CD8-positive, alpha-beta T cell (primary cell): ENCODE measurements at regions of chr6 and their contacts with region 1.

Region 1: DNA sequence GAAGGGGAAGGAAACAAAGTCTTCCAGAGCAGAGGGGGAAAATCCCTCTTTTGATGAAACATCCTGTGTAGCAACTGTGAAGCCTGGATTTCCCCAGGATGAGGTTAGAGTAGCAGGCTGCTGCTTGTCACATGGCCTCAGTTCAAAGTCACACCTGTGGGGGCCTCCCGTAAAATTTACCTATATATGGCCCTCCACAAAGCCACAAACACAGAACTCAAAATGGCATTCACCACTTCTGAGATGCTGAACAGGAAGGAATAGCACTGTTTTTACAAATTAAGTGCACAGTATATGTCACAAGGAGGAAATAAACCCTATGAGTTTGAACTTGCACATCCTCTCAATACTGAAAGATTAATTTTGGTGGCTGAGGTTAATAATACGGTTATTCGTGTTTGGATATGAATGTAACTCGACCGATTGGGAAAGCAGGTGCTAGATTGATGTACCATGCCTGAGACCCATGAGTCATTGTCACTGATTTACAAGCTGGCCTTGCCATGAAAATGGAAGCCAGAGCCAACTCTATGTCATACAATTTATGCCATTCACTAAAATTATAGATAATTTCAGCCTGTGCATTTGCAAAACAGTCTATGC is 70.6 kb downstream of the SGK1 start:
- DNase-seq: peak; percentile 47 to 96 (median 68)
- ATAC-seq: peak; percentile 87
- H3K4me3 ChIP-seq: no peak overlapping the region
- H3K4me3 Mint-ChIP-seq: peak overlapping the region; percentile 54
- H3K27ac ChIP-seq: peak overlapping the region; percentile 20 to 76
- H3K27ac Mint-ChIP-seq: peak overlapping the region; percentile 92
- H3K4me1 ChIP-seq: peaks cover 63% of the 10 kb centered on the region
- H3K4me1 Mint-ChIP-seq: peaks cover 61% of the 10 kb centered on the region
- H3K27me3 ChIP-seq: no peaks in the 10 kb centered on the region
- H3K27me3 Mint-ChIP-seq: no peaks in the 10 kb centered on the region
- CTCF ChIP-seq: no peak

Region 2: GRCh38 chr6:134235937-134236751 is 11.2 kb before region 1 on chr6:
- CTCF ChIA-PET with region 1: no interaction called
- POLR2A ChIA-PET with region 1: no interaction called
- intact Hi-C with region 1: loop called in 1 of 2 experiments (anchors 2 kb)
- DNase-seq: peak in 2 of 9 experiments; percentile 50 to 69
- ATAC-seq: peak; percentile 38
- H3K4me3 ChIP-seq: no peak overlapping the region
- H3K4me3 Mint-ChIP-seq: no peak overlapping the region
- H3K27ac ChIP-seq: no peak overlapping the region
- H3K27ac Mint-ChIP-seq: no peak overlapping the region
- H3K4me1 ChIP-seq: peaks cover 24% of the 10 kb centered on the region
- H3K4me1 Mint-ChIP-seq: peaks cover 33% of the 10 kb centered on the region
- H3K27me3 ChIP-seq: no peaks in the 10 kb centered on the region
- H3K27me3 Mint-ChIP-seq: no peaks in the 10 kb centered on the region
- CTCF ChIP-seq: no peak

Region 3: DNA sequence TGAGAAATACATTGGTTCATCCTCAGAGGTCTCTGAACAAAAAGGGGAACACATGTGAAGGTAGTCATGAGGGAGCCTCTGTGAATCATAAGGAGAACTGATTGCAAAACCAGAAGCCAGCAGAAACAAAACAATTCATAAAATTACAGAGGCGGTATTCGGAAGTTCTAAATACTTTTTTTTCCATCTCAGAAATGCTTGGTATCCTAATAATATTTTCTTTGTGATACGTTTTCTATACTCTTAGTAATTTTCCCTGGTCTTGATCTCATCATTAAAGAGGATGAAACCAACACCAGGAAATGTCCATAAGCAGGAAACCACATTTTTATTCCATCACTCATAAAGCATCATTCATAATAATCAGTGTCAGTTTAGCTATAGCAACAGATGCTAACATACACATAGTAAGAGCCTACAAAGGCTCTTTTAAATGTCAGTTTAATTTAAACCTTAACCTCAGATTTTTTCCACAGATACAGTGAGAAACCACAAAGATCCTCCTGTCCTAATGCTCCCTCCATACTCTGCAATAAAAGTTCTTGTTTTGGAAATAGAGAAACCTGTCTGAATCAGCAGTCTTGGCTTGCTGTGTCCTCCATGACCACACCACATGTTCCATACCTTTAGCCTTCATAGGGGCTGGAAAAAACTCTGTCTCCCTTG is 41.3 kb after region 1 on chr6:
- CTCF ChIA-PET with region 1: no interaction called
- POLR2A ChIA-PET with region 1: no interaction called
- intact Hi-C with region 1: loop called in 1 of 2 experiments (anchors 5 kb)
- DNase-seq: peak in 1 of 9 experiments; percentile 32
- ATAC-seq: peak; percentile 31
- H3K4me3 ChIP-seq: no peak overlapping the region
- H3K4me3 Mint-ChIP-seq: no peak overlapping the region
- H3K27ac ChIP-seq: peak overlapping the region in 1 of 2 experiments; percentile 24
- H3K27ac Mint-ChIP-seq: no peak overlapping the region
- H3K4me1 ChIP-seq: peaks cover 13% of the 10 kb centered on the region
- H3K4me1 Mint-ChIP-seq: peaks cover 20% of the 10 kb centered on the region
- H3K27me3 ChIP-seq: no peaks in the 10 kb centered on the region
- H3K27me3 Mint-ChIP-seq: no peaks in the 10 kb centered on the region
- CTCF ChIP-seq: no peak

Region 4: GRCh38 chr6:134317471-134318131 is 70.3 kb after region 1 on chr6 and contains the start of gene SGK1:
- CTCF ChIA-PET with region 1: no interaction called
- POLR2A ChIA-PET with region 1: interaction called, 3 read pairs
- intact Hi-C with region 1: loop called in 1 of 2 experiments (anchors 5 kb)
- DNase-seq: peak in 8 of 9 experiments; percentile 7 to 64 (median 30)
- ATAC-seq: peak; percentile 65
- H3K4me3 ChIP-seq: peak within 1 kb of the TSS; percentile 53 to 74
- H3K4me3 Mint-ChIP-seq: peak within 1 kb of the TSS; percentile 91
- H3K27ac ChIP-seq: peak within 1 kb of the TSS in 1 of 2 experiments; percentile 21
- H3K27ac Mint-ChIP-seq: peak within 1 kb of the TSS; percentile 60
- H3K4me1 ChIP-seq: peaks cover 7% of the 10 kb centered on the region
- H3K4me1 Mint-ChIP-seq: peaks cover 18% of the 10 kb centered on the region
- H3K27me3 ChIP-seq: no peaks in the 10 kb centered on the region
- H3K27me3 Mint-ChIP-seq: peaks cover 17% of the 10 kb centered on the region
- CTCF ChIP-seq: no peak
- total RNA-seq, gene SGK1: 127 to 128 TPM

Region 5: DNA sequence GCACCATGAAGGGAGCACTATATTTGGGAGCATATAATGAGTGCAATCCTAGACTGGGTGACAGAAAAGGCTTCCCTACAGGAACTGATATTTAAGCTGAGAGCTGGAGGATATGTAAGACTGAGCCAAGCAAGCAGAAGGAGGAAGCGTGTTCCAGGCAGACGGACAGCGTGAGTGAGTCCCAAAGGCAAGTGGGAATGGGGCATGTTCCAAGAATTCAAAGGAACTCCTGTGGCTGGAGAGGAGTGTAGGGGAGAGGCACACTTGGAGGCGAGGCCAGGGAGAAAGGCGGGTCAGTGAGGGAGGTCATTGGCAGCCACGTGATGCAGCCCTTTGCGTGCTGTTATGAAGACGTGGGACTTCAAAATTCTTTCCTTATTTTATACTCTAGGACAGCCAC is 98.4 kb after region 1 on chr6:
- CTCF ChIA-PET with region 1: no interaction called
- POLR2A ChIA-PET with region 1: no interaction called
- intact Hi-C with region 1: no loop called
- DNase-seq: no peak
- ATAC-seq: no peak
- H3K4me3 ChIP-seq: no peak overlapping the region
- H3K4me3 Mint-ChIP-seq: no peak overlapping the region
- H3K27ac ChIP-seq: no peak overlapping the region
- H3K27ac Mint-ChIP-seq: no peak overlapping the region
- H3K4me1 ChIP-seq: no peaks in the 10 kb centered on the region
- H3K4me1 Mint-ChIP-seq: peaks cover 10% of the 10 kb centered on the region
- H3K27me3 ChIP-seq: no peaks in the 10 kb centered on the region
- H3K27me3 Mint-ChIP-seq: no peaks in the 10 kb centered on the region
- CTCF ChIP-seq: no peak

Region 6: GRCh38 chr6:135030056-135030473 is 782.7 kb after region 1 on chr6:
- CTCF ChIA-PET with region 1: no interaction called
- POLR2A ChIA-PET with region 1: no interaction called
- intact Hi-C with region 1: no loop called
- DNase-seq: peak in 2 of 9 experiments; percentile 39 to 61
- ATAC-seq: peak; percentile 79
- H3K4me3 ChIP-seq: no peak overlapping the region
- H3K4me3 Mint-ChIP-seq: peak overlapping the region; percentile 47
- H3K27ac ChIP-seq: peak overlapping the region in 1 of 2 experiments; percentile 9
- H3K27ac Mint-ChIP-seq: peak overlapping the region; percentile 81
- H3K4me1 ChIP-seq: peaks cover 13% of the 10 kb centered on the region
- H3K4me1 Mint-ChIP-seq: peaks cover 70% of the 10 kb centered on the region
- H3K27me3 ChIP-seq: no peaks in the 10 kb centered on the region
- H3K27me3 Mint-ChIP-seq: no peaks in the 10 kb centered on the region
- CTCF ChIP-seq: no peak